Keratinocyte (primary cell): ENCODE measurements at regions of chr7 and their contacts with region 1.

Region 1: GRCh38 chr7:34596892-34597291 is 61.1 kb upstream of the NPSR1 start:
- DNase-seq: no peak
- H3K4me3 ChIP-seq: no peak overlapping the region
- H3K27ac ChIP-seq: no peak overlapping the region
- H3K4me1 ChIP-seq: no peaks in the 10 kb centered on the region
- H3K27me3 ChIP-seq: no peaks in the 10 kb centered on the region
- CTCF ChIP-seq: peak; percentile 54 to 70 (median 64)

Region 2: DNA sequence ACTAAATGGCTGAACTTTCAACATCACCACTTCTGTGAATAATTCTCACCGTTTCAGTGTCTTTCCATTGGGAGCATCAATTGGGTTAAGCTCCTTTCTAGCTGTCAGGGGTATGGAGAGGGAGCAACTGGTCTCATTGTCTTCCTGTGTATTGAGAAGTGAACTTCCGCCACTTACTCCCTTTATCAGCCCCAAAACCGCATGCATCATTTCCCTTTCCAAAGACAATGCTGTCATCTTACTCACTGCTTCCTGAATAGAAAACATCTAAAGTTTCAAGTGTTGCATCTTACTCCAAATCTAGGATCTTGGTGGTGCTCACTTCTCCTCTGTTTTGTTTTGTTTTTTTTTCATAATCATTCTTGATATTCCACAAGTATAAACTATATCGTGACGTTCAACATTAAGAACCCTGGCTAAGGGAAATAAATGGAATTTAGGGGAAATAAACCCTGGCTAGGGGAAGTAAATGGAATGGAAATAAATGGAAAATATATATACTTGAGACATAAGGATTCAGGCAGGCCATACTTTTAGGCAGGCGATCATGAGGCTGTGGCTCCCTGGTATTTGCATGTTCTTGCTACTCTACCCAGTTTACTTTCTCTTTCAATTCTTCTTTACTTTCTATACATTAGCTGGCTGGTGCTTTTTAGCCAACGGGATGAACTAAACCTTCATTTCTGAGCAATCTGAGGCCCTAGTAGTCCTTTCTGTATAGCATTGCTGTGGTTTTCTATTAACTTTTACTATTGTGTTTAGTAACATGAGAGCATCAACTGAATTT is 319.7 kb before region 1 on chr7:
- dilution Hi-C with region 1: loop called (anchors 25 kb)
- DNase-seq: no peak
- H3K4me3 ChIP-seq: no peak overlapping the region
- H3K27ac ChIP-seq: no peak overlapping the region
- H3K4me1 ChIP-seq: no peaks in the 10 kb centered on the region
- H3K27me3 ChIP-seq: no peaks in the 10 kb centered on the region
- CTCF ChIP-seq: no peak